CD4-positive, alpha-beta memory T cell (primary cell): ENCODE measurements at regions of chr12 and their contacts with region 1.

Region 1: DNA sequence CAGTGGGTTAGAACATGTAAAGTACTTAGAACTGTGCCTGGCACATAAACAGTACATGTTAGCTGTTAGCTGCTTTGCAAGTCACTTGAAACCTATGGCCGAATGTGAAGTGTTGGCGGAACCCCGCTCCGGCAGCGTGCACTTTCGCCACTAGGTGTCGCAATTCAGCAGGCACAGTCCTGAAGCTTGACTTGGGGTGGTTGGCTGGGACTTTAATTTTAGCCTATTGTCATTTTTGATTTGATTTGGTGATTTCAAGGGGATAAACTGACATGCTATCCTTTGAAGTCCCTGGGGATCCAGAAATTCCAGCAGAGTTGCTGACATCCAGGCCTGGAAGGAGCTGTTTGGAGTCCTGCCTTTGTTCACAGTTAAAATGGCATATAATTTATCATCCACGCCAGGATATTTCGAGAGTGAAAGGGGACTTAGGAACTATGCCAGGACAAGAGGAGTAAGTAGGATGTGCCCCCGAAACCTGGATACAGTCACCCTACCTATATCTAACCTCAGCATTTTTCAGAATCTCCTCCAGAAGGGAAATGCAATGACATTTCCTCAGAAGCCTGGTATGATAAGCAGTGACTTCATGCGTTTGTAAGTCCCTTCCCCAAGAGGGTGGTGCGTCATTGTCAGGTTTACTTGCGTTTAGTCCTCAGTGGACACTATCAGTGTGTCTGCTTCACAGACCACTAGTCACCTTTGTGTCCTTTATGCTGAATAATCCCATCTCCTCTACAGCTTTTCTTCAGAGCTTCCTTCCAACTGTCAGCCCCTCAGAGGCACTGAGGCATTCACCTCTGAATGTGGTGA is 3.5 kb upstream of the TSPAN9 start:
- DNase-seq: peak; percentile 74 to 78 (median 77)
- H3K4me3 ChIP-seq: no peak overlapping the region
- H3K4me3 Mint-ChIP-seq: peak overlapping the region in 2 of 8 donors; percentile 36 to 82
- H3K27ac ChIP-seq: no peak overlapping the region
- H3K27ac Mint-ChIP-seq: peak overlapping the region in 1 of 7 donors; percentile 67
- H3K4me1 ChIP-seq: peaks cover 9% of the 10 kb centered on the region
- H3K4me1 Mint-ChIP-seq: peaks cover 2 to 15% (median 12%) of the 10 kb centered on the region in 4 donors
- H3K27me3 ChIP-seq: no peaks in the 10 kb centered on the region
- H3K27me3 Mint-ChIP-seq: peaks cover 3 to 8% of the 10 kb centered on the region in 2 donors

Region 2: DNA sequence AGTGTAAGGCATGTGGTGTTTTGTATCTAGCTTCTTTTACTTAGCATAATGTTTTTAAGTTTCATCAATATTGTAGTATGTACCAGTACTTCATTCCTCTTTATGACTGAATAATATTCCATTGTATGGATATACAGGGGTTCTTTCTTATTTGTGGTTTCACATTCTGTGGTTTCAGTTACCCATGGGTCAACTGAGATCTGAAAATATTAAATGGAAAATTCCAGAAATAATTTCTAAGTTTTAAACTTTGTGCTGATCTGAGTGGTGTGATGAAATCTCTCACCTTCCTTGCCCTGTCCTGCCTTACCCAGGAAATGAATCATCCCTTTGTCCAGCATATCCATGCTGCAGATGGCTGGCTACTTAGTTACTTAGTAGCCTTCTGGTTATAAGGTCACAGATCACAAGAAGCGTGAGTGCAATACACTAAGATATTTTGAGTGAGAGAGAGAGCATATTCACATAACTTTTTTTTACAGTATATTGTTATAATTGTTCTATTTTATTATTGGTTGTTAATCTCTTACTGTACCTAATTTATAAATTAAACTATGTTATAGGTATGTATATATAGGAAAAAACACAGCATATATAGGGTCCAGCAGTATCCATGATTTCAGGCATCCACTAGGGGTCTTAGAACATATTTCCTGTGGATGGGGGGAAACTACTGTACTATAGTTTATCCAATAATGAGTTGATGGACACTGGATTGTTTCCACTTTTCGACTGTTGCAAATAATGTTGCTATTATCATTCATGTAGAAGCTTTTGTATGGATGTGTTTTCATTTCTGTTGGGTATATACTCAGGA is 1312.9 kb before region 1 on chr12:
- CTCF ChIA-PET with region 1: no interaction called
- POLR2A ChIA-PET with region 1: no interaction called
- intact Hi-C with region 1: no loop called
- DNase-seq: no peak
- H3K4me3 ChIP-seq: no peak overlapping the region
- H3K4me3 Mint-ChIP-seq: no peak overlapping the region
- H3K27ac ChIP-seq: no peak overlapping the region
- H3K27ac Mint-ChIP-seq: peak overlapping the region in 2 of 7 donors; percentile 1 to 19
- H3K4me1 ChIP-seq: no peaks in the 10 kb centered on the region
- H3K4me1 Mint-ChIP-seq: peaks cover 3 to 17% (median 11%) of the 10 kb centered on the region in 4 donors
- H3K27me3 ChIP-seq: no peaks in the 10 kb centered on the region
- H3K27me3 Mint-ChIP-seq: no peaks in the 10 kb centered on the region

Region 3: GRCh38 chr12:2666411-2666810 is 407.2 kb before region 1 on chr12:
- CTCF ChIA-PET with region 1: no interaction called
- POLR2A ChIA-PET with region 1: no interaction called
- intact Hi-C with region 1: no loop called
- DNase-seq: no peak
- H3K4me3 ChIP-seq: no peak overlapping the region
- H3K4me3 Mint-ChIP-seq: no peak overlapping the region
- H3K27ac ChIP-seq: no peak overlapping the region
- H3K27ac Mint-ChIP-seq: no peak overlapping the region
- H3K4me1 ChIP-seq: no peaks in the 10 kb centered on the region
- H3K4me1 Mint-ChIP-seq: no peaks in the 10 kb centered on the region
- H3K27me3 ChIP-seq: no peaks in the 10 kb centered on the region
- H3K27me3 Mint-ChIP-seq: no peaks in the 10 kb centered on the region

Region 4: GRCh38 chr12:3186546-3187215 is 113.0 kb after region 1 on chr12:
- CTCF ChIA-PET with region 1: no interaction called
- POLR2A ChIA-PET with region 1: no interaction called
- intact Hi-C with region 1: no loop called
- DNase-seq: no peak
- H3K4me3 ChIP-seq: no peak overlapping the region
- H3K4me3 Mint-ChIP-seq: no peak overlapping the region
- H3K27ac ChIP-seq: no peak overlapping the region
- H3K27ac Mint-ChIP-seq: no peak overlapping the region
- H3K4me1 ChIP-seq: no peaks in the 10 kb centered on the region
- H3K4me1 Mint-ChIP-seq: no peaks in the 10 kb centered on the region
- H3K27me3 ChIP-seq: no peaks in the 10 kb centered on the region
- H3K27me3 Mint-ChIP-seq: peaks cover 6 to 24% of the 10 kb centered on the region in 2 donors

Region 5: GRCh38 chr12:3202734-3203446 is 129.2 kb after region 1 on chr12:
- CTCF ChIA-PET with region 1: interaction called, 12 read pairs
- POLR2A ChIA-PET with region 1: no interaction called
- intact Hi-C with region 1: loop called (anchors 1 kb)
- DNase-seq: peak in 4 of 5 donors; percentile 11 to 29 (median 18)
- H3K4me3 ChIP-seq: no peak overlapping the region
- H3K4me3 Mint-ChIP-seq: peak overlapping the region in 1 of 8 donors; percentile 61
- H3K27ac ChIP-seq: no peak overlapping the region
- H3K27ac Mint-ChIP-seq: peak overlapping the region in 1 of 7 donors; percentile 21
- H3K4me1 ChIP-seq: no peaks in the 10 kb centered on the region
- H3K4me1 Mint-ChIP-seq: peaks cover 4 to 19% (median 5%) of the 10 kb centered on the region in 4 donors
- H3K27me3 ChIP-seq: peaks cover 8% of the 10 kb centered on the region
- H3K27me3 Mint-ChIP-seq: peaks cover 29 to 30% of the 10 kb centered on the region in 2 donors

Region 6: DNA sequence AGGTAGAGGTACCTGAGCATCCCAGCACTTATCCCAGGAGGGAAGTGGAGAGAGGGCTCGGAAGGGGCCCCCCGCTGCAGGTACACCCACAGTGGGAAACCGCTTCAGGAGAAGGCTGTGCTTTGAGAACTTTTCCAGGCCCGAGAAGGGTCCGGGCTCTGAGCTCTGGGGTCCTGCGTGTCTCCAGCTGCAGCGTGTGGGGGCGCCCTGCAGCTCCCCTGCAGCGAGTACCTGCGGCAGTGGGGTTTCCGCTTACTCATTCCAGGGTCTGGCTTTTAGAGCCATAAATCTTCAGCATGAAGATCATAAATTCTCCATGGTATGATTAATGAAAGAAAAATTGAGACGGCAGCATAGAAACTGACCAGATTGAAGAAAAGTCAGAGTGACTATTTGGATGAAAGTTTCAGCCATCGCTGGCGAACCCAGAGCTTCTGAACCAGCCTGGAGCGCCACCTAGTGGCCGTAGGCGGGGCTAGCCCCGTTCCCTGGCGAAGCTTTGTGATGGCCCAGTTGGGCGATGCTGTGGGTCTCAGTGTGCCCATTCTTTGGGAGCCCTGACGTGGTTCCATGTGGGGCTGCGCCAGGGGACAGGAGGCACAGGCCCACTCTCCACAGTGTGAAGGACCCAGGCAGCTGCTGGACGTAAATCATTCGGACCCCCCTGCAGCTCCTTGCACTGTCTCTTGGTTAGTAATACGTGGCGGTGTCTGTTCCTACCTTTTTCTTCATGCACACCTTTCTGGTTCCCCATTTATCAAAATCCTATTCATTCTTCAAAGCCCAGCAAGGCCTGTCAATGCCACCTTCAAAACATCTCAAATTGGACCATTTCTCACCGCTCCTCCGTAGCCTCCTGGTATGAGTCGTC is 201.8 kb after region 1 on chr12:
- CTCF ChIA-PET with region 1: interaction called, 54 read pairs
- POLR2A ChIA-PET with region 1: interaction called, 3 read pairs
- intact Hi-C with region 1: loop called (anchors 1 kb)
- DNase-seq: peak in 4 of 5 donors; percentile 46 to 58 (median 52)
- H3K4me3 ChIP-seq: no peak overlapping the region
- H3K4me3 Mint-ChIP-seq: peak overlapping the region in 2 of 8 donors; percentile 25 to 46
- H3K27ac ChIP-seq: no peak overlapping the region
- H3K27ac Mint-ChIP-seq: no peak overlapping the region
- H3K4me1 ChIP-seq: no peaks in the 10 kb centered on the region
- H3K4me1 Mint-ChIP-seq: no peaks in the 10 kb centered on the region
- H3K27me3 ChIP-seq: no peaks in the 10 kb centered on the region
- H3K27me3 Mint-ChIP-seq: peaks cover 8 to 20% of the 10 kb centered on the region in 2 donors